Posterior cingulate gyrus (tissue), 11 donors: ENCODE measurements at regions of chr16 and their contacts with region 1.

Region 1: DNA sequence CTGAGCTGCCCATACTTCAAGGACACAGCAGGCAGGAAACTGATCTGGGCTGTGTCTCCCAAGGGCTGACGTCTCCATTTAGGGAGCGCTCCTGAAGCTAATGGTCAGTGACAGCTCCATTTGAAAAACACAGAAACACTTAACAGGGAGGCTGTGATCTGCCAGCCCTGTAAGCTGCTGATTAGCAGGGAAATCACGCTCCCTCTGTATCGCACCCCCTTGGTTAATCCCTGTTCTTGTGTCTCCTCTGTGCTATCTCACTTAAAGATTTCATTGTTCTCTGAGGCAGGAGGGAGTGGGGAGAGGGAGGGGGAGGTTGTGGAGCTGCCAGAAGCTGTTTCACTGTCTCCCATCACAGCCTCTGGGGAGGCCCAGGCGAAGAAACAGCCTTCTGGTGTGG is 47.4 kb upstream of the CACNG3 start:
- DNase-seq: peak in 8 of 10 donors; percentile 39 to 93 (median 62)

Region 2: DNA sequence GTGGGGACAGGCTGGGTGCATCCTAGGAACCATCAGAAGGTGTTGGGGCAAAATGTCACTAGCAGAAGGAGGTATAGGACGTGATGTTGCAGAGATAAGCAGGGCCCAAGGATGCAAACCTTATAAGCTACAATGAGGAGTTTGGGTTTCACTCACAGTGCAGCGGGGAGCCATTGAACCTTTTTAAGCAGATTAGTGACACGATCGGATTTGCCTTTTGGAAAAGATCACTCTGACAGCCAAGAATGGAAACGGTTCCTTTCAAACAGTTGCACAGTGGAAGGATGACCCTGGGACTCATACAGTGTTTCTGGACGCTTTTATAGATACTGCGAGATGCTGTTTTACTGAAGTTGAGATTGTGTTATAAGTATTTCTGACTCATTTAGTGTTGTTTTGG is 84.4 kb before region 1 on chr16:
- intact Hi-C with region 1: loop called (anchors 5 kb)
- DNase-seq: peak in 1 of 10 donors; percentile 12